Activated CD4-positive, alpha-beta T cell treated with anti-CD3 and anti-CD28 coated beads for 36 hours (primary cell): ENCODE measurements at regions of chr18 and their contacts with region 1.

Region 1: DNA sequence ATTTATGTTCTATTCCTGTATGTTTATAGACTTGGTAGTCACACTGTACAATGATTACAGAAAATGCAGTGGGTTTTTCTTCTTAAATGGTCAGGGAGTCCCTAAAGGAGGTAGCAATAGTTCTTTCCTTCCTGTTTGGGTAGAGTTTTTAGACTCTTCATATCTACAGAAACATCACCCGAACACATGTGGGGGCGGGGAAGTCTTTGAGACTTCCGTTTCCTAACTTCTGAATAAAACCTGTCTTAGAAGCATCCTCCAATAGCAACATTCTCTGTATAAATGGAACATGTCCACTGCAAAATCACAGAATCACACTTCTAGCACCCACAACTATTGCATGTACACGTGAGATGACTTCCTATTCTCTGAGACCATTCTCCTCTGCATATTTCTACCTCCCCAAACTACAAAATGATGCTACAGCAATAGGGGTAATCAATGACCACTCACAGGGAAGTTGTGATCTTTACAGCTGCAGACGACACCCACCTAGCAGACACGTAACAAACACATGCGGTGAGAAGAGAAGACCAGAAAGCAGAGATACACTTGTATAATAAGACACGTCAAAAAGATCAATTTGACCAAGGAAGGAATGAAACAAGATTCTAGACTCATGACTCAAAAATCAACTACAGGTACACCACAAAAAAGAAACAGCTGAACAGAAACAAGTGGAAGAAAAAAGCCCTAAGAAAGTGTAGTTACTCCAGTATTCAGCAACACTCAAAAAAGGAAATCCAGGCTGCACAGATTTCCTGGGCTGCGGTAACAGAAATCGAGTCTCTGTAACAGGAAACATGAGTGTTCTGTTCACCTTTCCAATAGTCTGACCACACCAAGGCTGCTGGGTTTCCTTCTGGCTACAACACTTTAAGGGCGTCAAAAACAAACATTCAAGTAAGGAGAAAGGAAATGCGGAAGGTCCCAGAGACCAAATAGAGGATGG is 120.4 kb downstream of the ZNF516 start:
- DNase-seq: peak; percentile 72
- ATAC-seq: peak; percentile 69
- H3K4me3 Mint-ChIP-seq: peak overlapping the region; percentile 2
- H3K27ac Mint-ChIP-seq: peak overlapping the region; percentile 82
- H3K4me1 Mint-ChIP-seq: peaks cover 50% of the 10 kb centered on the region
- H3K27me3 Mint-ChIP-seq: no peaks in the 10 kb centered on the region

Region 2: GRCh38 chr18:76209597-76209996 is 165.0 kb before region 1 on chr18:
- CTCF ChIA-PET with region 1: no interaction called
- POLR2A ChIA-PET with region 1: no interaction called
- intact Hi-C with region 1: loop called in 1 of 2 experiments (anchors 2 kb)
- DNase-seq: peak; percentile 37
- ATAC-seq: peak; percentile 87
- H3K4me3 Mint-ChIP-seq: no peak overlapping the region
- H3K27ac Mint-ChIP-seq: peak overlapping the region; percentile 76
- H3K4me1 Mint-ChIP-seq: peaks cover 25% of the 10 kb centered on the region
- H3K27me3 Mint-ChIP-seq: peaks cover 8% of the 10 kb centered on the region

Region 3: DNA sequence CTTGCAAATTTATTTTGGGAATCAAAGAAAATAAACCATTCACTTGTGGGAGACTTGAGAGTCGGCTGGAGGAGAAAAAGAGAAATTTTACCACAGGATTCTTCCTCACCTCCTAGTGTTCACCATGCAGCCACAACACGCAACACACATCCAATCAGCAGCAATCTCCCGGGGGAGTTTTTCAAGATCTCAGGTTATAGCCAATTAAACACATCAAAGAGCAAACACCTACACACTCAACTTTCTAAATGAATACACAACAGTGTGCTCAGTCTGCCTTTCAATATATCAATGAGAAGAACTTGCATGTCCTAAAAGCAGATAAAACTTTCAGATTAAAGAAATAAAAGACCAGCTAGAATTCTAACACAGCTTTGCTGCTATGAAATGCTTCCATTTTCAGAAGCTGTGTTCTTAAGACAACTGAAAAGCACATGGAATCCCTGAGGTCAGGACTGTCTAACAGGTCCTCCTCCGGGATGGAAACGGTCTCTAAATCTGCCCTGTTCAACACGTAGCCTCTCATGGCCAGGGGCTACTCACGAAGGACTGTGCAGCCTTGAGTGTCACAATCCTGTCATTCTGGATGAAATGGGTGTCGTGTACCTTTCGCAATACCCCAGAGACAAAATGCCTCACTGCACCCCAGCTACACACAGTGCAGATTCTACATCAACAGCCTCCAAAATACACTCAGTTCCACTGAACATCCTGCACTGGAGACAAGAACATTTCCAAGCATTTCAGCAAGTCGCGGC is 36.2 kb after region 1 on chr18:
- CTCF ChIA-PET with region 1: no interaction called
- POLR2A ChIA-PET with region 1: no interaction called
- intact Hi-C with region 1: loop called in 1 of 2 experiments (anchors 2 kb)
- DNase-seq: peak; percentile 59
- ATAC-seq: peak; percentile 94
- H3K4me3 Mint-ChIP-seq: no peak overlapping the region
- H3K27ac Mint-ChIP-seq: no peak overlapping the region
- H3K4me1 Mint-ChIP-seq: peaks cover 20% of the 10 kb centered on the region
- H3K27me3 Mint-ChIP-seq: peaks cover 4% of the 10 kb centered on the region

Region 4: GRCh38 chr18:76765649-76766048 is 391.0 kb after region 1 on chr18:
- CTCF ChIA-PET with region 1: no interaction called
- POLR2A ChIA-PET with region 1: no interaction called
- intact Hi-C with region 1: no loop called
- DNase-seq: no peak
- ATAC-seq: no peak
- H3K4me3 Mint-ChIP-seq: no peak overlapping the region
- H3K27ac Mint-ChIP-seq: no peak overlapping the region
- H3K4me1 Mint-ChIP-seq: peaks cover 13% of the 10 kb centered on the region
- H3K27me3 Mint-ChIP-seq: no peaks in the 10 kb centered on the region

Region 5: GRCh38 chr18:76822510-76823160 is 448.0 kb after region 1 on chr18 and contains the start of gene ZNF236:
- CTCF ChIA-PET with region 1: no interaction called
- POLR2A ChIA-PET with region 1: no interaction called
- intact Hi-C with region 1: loop called in 1 of 2 experiments (anchors 5 kb)
- DNase-seq: peak; percentile 79
- ATAC-seq: peak; percentile 51
- H3K4me3 Mint-ChIP-seq: peak within 1 kb of the TSS; percentile 91
- H3K27ac Mint-ChIP-seq: peak within 1 kb of the TSS; percentile 89
- H3K4me1 Mint-ChIP-seq: peaks cover 52% of the 10 kb centered on the region
- H3K27me3 Mint-ChIP-seq: no peaks in the 10 kb centered on the region
- total RNA-seq, gene ZNF236: 13.7 to 25.7 TPM

Region 6: DNA sequence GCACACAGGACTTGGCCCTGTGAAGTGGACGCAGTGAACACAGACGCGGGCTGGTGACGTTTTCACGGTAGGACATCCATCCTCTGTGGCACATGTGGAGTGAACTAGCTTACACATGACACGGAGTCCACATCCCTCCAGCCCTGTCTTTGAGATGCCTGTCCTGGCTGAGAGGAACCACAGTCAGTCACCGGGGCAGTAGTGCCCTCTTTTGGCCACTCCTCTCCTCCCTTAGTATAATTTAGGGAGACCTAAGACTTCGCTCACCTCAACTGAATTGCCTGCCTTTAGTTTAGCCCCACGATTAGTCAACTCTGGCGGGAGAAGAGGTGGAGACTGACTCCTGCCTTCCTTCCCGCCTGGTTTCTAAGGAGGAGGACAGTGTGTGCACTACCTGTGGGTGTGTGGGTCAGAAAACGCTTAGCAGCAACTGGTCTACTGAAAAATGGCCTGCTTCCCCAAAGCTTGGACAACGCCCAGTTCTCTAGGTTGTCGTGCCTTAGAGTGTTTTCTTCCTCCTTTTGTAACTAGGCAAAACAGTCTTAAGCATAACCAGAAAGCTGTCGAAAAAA is 687.4 kb after region 1 on chr18:
- CTCF ChIA-PET with region 1: no interaction called
- POLR2A ChIA-PET with region 1: no interaction called
- intact Hi-C with region 1: loop called (anchors 5 to 10 kb)
- DNase-seq: peak; percentile 42
- ATAC-seq: peak; percentile 17
- H3K4me3 Mint-ChIP-seq: peak overlapping the region; percentile 47
- H3K27ac Mint-ChIP-seq: peak overlapping the region; percentile 98
- H3K4me1 Mint-ChIP-seq: peaks cover 83% of the 10 kb centered on the region
- H3K27me3 Mint-ChIP-seq: no peaks in the 10 kb centered on the region

Region 7: DNA sequence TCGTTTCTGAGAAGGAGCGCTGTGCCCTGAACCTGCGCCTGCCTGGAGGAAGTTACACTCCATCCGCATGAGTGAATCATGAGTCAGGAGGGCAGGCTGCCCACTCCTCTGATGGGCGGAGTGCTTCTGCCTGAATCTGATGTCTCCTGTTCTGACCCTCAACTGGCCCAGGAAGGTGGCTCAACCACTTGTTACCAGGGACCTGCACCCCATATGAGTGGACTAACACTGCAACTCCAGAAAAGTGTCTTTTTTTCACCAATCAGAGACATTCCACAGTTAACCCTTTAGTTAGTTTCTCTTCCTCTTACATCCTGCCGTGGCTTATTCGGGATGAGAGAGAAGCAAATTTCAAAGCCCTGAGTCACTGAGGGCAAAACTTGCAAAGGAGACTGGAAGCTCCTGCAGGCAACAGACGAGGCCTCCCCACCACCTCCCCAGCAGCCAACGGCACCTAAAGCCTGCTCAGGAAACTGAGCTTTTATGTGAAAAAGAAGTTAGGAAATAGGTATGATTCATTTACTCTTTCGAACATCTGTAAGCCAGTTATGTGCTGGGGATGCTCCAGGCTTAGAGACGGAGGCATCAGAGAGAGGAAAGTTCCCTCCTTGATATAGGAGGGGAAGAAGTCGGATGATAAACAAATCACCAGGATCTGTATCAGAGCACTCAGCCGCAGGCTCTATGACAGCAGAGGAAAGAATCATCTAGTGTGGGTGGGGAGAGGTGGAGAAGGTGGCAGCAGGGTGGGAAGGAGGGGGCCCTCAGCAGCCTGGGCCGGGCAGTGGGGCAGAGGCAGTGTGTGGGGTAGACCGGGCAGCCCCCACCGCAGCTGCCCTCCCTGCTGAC is 727.0 kb after region 1 on chr18:
- CTCF ChIA-PET with region 1: no interaction called
- POLR2A ChIA-PET with region 1: no interaction called
- intact Hi-C with region 1: loop called in 1 of 2 experiments (anchors 10 kb)
- DNase-seq: peak; percentile 79
- ATAC-seq: peak; percentile 49
- H3K4me3 Mint-ChIP-seq: peak overlapping the region; percentile 60
- H3K27ac Mint-ChIP-seq: peak overlapping the region; percentile 98
- H3K4me1 Mint-ChIP-seq: peaks cover 94% of the 10 kb centered on the region
- H3K27me3 Mint-ChIP-seq: no peaks in the 10 kb centered on the region